Posterior vena cava (tissue), 2 donors: ENCODE measurements at regions of chr4 and their contacts with region 1.

Region 1: GRCh38 chr4:20042769-20043168 is 208.9 kb upstream of the SLIT2 start:
- DNase-seq: no peak

Region 2: DNA sequence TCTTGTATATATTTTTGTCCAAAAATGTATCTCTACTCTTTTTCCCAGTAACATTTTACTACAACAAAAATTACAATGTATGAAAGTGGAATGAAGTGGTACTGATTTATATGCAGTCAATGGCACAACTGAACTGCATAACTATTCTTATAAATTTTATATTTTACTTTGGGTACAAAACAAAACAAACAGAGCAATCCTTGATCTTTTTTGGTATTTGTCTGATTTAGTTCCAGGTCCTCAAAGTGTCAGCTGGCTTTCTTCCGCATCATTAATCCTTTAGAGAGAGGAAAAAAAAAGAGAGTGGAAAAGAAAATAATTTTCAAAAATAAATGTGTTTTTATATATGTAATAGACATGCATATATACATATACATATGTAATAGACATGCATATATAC is 43.5 kb before region 1 on chr4:
- intact Hi-C with region 1: loop called in 1 of 2 experiments (anchors 1 kb)
- DNase-seq: no peak